Activated CD4-positive, alpha-beta T cell treated with anti-CD3 and anti-CD28 coated beads, Interleukin-2, amount 10 ng/mL, durations not matched to agents 24 days and 14 days (primary cell): ENCODE measurements at regions of chr9 and their contacts with region 1.

Region 1: DNA sequence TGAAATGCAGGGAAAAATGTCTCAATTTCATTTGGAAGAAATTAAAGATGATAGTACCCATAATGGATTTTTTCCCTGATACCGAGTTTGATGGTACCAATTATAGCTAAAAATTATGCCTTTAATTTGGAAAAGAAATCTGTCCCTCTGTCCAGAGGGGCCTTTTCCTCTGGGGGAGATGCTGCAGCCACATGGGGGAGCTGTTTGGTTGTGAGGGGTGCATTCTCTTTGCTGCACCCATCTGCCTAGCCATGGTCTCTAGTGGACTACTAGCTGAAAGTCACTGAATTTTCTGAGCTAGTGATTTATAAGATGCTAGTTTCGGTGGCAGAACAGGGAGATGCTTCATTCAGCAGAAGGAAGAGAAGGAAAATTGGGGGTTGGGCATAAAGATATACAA is 9.6 kb downstream of the SEC61B start:
- DNase-seq: peak; percentile 78
- H3K4me3 Mint-ChIP-seq: no peak overlapping the region
- H3K27ac Mint-ChIP-seq: no peak overlapping the region
- H3K4me1 Mint-ChIP-seq: peaks cover 19% of the 10 kb centered on the region
- H3K27me3 Mint-ChIP-seq: no peaks in the 10 kb centered on the region

Region 2: GRCh38 chr9:99266255-99267023 is 34.7 kb after region 1 on chr9:
- intact Hi-C with region 1: loop called (anchors 5 kb)
- DNase-seq: peak; percentile 88
- H3K4me3 Mint-ChIP-seq: peak overlapping the region; percentile 61
- H3K27ac Mint-ChIP-seq: peak overlapping the region; percentile 55
- H3K4me1 Mint-ChIP-seq: peaks cover 26% of the 10 kb centered on the region
- H3K27me3 Mint-ChIP-seq: peaks cover 13% of the 10 kb centered on the region